CD8-positive, alpha-beta T cell (primary cell): ENCODE measurements at regions of chr1 and their contacts with region 1.

Region 1: GRCh38 chr1:44786138-44786840 is 1.7 kb downstream of the BEST4 start:
- DNase-seq: peak in 8 of 9 experiments; percentile 63 to 89 (median 78)
- ATAC-seq: peak; percentile 85
- H3K4me3 ChIP-seq: peak overlapping the region; percentile 56 to 94
- H3K4me3 Mint-ChIP-seq: peak overlapping the region; percentile 82
- H3K27ac ChIP-seq: peak overlapping the region; percentile 33 to 63
- H3K27ac Mint-ChIP-seq: peak overlapping the region; percentile 86
- H3K4me1 ChIP-seq: peaks cover 34% of the 10 kb centered on the region
- H3K4me1 Mint-ChIP-seq: peaks cover 29% of the 10 kb centered on the region
- H3K27me3 ChIP-seq: no peaks in the 10 kb centered on the region
- H3K27me3 Mint-ChIP-seq: no peaks in the 10 kb centered on the region
- CTCF ChIP-seq: peak; percentile 100

Region 2: GRCh38 chr1:44270686-44271628 is 515.3 kb before region 1 on chr1:
- CTCF ChIA-PET with region 1: no interaction called
- POLR2A ChIA-PET with region 1: no interaction called
- intact Hi-C with region 1: no loop called
- DNase-seq: no peak
- ATAC-seq: no peak
- H3K4me3 ChIP-seq: no peak overlapping the region
- H3K4me3 Mint-ChIP-seq: no peak overlapping the region
- H3K27ac ChIP-seq: no peak overlapping the region
- H3K27ac Mint-ChIP-seq: no peak overlapping the region
- H3K4me1 ChIP-seq: peaks cover 6% of the 10 kb centered on the region
- H3K4me1 Mint-ChIP-seq: peaks cover 21% of the 10 kb centered on the region
- H3K27me3 ChIP-seq: no peaks in the 10 kb centered on the region
- H3K27me3 Mint-ChIP-seq: no peaks in the 10 kb centered on the region
- CTCF ChIP-seq: no peak

Region 3: DNA sequence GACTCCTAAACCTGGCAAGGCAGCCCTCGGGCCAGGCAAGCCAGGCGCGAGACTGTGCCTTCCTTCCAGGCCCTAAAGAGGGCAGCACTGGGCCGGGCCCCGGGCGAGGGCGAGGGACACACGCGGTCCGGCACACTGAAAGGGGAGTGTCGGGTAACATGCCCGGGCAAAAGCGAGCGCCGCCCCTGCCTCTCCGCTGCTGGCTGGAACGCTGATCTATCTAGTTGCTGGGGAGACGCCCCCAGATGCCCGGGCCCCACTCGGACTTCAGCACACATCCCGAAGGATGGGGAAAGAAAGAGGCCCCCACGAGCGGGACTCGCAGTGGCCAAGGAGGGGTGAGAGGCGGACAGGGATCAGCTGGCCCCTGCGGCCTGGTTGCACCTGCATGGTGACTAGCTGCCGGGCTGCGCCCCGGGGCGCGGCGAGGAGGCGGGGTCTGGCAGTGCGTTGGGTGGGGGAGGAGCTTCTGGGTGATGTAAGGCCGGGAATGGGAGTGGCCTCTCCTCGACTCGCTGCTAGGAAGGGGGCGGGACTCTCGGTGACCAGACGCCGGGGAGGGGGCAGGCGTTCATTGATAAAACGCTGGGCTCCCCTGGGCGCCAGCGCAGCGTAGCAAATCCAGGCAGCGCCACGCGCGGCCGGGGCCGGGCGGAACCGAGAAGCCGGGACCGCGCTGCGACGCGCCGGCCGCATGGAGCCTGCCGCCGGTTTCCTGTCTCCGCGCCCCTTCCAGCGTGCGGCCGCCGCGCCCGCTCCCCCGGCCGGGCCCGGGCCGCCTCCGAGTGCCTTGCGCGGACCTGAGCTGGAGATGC is 13.7 kb after region 1 on chr1 and contains the start of gene PLK3:
- CTCF ChIA-PET with region 1: interaction called, 14 read pairs
- POLR2A ChIA-PET with region 1: interaction called, 9 read pairs
- intact Hi-C with region 1: loop called in 1 of 2 experiments (anchors 2 kb)
- DNase-seq: peak; percentile 97 to 99 (median 98)
- ATAC-seq: peak; percentile 83
- H3K4me3 ChIP-seq: peak within 1 kb of the TSS; percentile 79 to 95
- H3K4me3 Mint-ChIP-seq: peak within 1 kb of the TSS; percentile 87
- H3K27ac ChIP-seq: peak within 1 kb of the TSS; percentile 91 to 98
- H3K27ac Mint-ChIP-seq: peak within 1 kb of the TSS; percentile 98
- H3K4me1 ChIP-seq: peaks cover 29% of the 10 kb centered on the region
- H3K4me1 Mint-ChIP-seq: peaks cover 37% of the 10 kb centered on the region
- H3K27me3 ChIP-seq: no peaks in the 10 kb centered on the region
- H3K27me3 Mint-ChIP-seq: no peaks in the 10 kb centered on the region
- CTCF ChIP-seq: peak; percentile 81
- total RNA-seq, gene PLK3: 568 to 599 TPM

Region 4: DNA sequence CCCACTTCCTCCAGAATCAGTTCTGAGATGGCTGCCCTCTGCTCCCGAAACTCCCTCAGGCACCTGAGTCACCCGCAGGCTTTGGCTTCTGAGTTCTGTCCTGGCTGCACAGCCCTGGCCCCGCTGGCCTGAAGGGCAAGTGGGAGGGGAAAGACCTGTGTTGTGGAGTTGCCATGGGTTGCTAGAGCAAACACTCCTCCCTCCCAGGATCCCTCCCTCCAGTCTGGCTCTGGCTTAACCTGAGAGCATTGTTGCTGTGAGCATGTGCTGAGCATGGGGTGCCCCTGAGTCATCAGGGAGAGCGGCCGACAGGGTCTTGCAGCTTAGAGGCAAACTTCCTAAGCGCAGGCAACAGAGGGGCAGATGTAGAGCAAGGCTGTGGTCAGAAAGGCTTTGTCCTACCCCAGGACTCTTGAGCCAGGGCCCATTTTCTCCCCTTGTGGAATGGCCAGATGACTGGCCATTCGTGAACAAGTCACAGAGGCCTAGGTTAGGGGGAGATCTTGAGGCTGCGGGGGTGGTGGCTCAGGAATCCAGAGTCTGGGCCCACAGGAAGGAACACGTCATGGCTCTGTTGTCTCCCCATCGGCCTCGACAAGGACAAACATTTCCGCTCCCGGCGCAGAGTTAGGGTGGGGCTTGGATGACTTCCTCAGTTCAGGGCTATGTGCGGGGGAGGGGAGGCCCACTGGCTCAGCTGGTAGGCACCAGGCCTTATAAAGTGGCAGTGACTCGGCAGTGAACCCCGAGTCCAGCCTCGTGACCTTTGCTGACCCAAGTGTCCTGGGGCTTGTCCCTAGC is 21.2 kb after region 1 on chr1 and contains the start of gene DYNLT4:
- CTCF ChIA-PET with region 1: interaction called, 3 read pairs
- POLR2A ChIA-PET with region 1: interaction called, 17 read pairs
- intact Hi-C with region 1: no loop called
- DNase-seq: peak; percentile 83 to 98 (median 93)
- ATAC-seq: peak; percentile 58
- H3K4me3 ChIP-seq: peak within 1 kb of the TSS in 1 of 2 experiments; percentile 35
- H3K4me3 Mint-ChIP-seq: peak within 1 kb of the TSS; percentile 60
- H3K27ac ChIP-seq: peak within 1 kb of the TSS; percentile 93 to 96
- H3K27ac Mint-ChIP-seq: peak within 1 kb of the TSS; percentile 99
- H3K4me1 ChIP-seq: peaks cover 70% of the 10 kb centered on the region
- H3K4me1 Mint-ChIP-seq: peaks cover 78% of the 10 kb centered on the region
- H3K27me3 ChIP-seq: no peaks in the 10 kb centered on the region
- H3K27me3 Mint-ChIP-seq: no peaks in the 10 kb centered on the region
- CTCF ChIP-seq: no peak
- total RNA-seq, gene DYNLT4: 2.2 to 2.5 TPM

Region 5: GRCh38 chr1:44835738-44836675 is 49.7 kb after region 1 on chr1:
- CTCF ChIA-PET with region 1: interaction called, 19 read pairs
- POLR2A ChIA-PET with region 1: no interaction called
- intact Hi-C with region 1: loop called in 1 of 2 experiments (anchors 1 kb)
- DNase-seq: peak; percentile 68 to 91 (median 85)
- ATAC-seq: peak; percentile 98
- H3K4me3 ChIP-seq: no peak overlapping the region
- H3K4me3 Mint-ChIP-seq: peak overlapping the region; percentile 16
- H3K27ac ChIP-seq: no peak overlapping the region
- H3K27ac Mint-ChIP-seq: no peak overlapping the region
- H3K4me1 ChIP-seq: no peaks in the 10 kb centered on the region
- H3K4me1 Mint-ChIP-seq: peaks cover 9% of the 10 kb centered on the region
- H3K27me3 ChIP-seq: no peaks in the 10 kb centered on the region
- H3K27me3 Mint-ChIP-seq: peaks cover 4% of the 10 kb centered on the region
- CTCF ChIP-seq: peak; percentile 73

Region 6: GRCh38 chr1:44924835-44925513 is 138.7 kb after region 1 on chr1:
- CTCF ChIA-PET with region 1: no interaction called
- POLR2A ChIA-PET with region 1: no interaction called
- intact Hi-C with region 1: no loop called
- DNase-seq: peak in 1 of 9 experiments; percentile 17
- ATAC-seq: no peak
- H3K4me3 ChIP-seq: no peak overlapping the region
- H3K4me3 Mint-ChIP-seq: no peak overlapping the region
- H3K27ac ChIP-seq: no peak overlapping the region
- H3K27ac Mint-ChIP-seq: no peak overlapping the region
- H3K4me1 ChIP-seq: no peaks in the 10 kb centered on the region
- H3K4me1 Mint-ChIP-seq: no peaks in the 10 kb centered on the region
- H3K27me3 ChIP-seq: no peaks in the 10 kb centered on the region
- H3K27me3 Mint-ChIP-seq: no peaks in the 10 kb centered on the region
- CTCF ChIP-seq: no peak

Region 7: GRCh38 chr1:44985747-44986359 is 199.6 kb after region 1 on chr1:
- CTCF ChIA-PET with region 1: interaction called, 3 read pairs
- POLR2A ChIA-PET with region 1: no interaction called
- intact Hi-C with region 1: loop called in 1 of 2 experiments (anchors 5 kb)
- DNase-seq: no peak
- ATAC-seq: no peak
- H3K4me3 ChIP-seq: peak overlapping the region; percentile 70 to 85
- H3K4me3 Mint-ChIP-seq: peak overlapping the region; percentile 97
- H3K27ac ChIP-seq: peak overlapping the region; percentile 31 to 42
- H3K27ac Mint-ChIP-seq: peak overlapping the region; percentile 93
- H3K4me1 ChIP-seq: peaks cover 15% of the 10 kb centered on the region
- H3K4me1 Mint-ChIP-seq: peaks cover 30% of the 10 kb centered on the region
- H3K27me3 ChIP-seq: no peaks in the 10 kb centered on the region
- H3K27me3 Mint-ChIP-seq: no peaks in the 10 kb centered on the region
- CTCF ChIP-seq: no peak